Panc1 (cell line): ENCODE measurements at regions of chr13 and their contacts with region 1.

Region 1: GRCh38 chr13:114226699-114227323 is 7.9 kb upstream of the CDC16 start:
- DNase-seq: peak; percentile 62
- ATAC-seq: peak; percentile 92
- H3K4me3 ChIP-seq: no peak overlapping the region
- H3K27ac ChIP-seq: peak overlapping the region; percentile 61; the same call in 1 of the 2 replicates
- H3K4me1 ChIP-seq: peaks cover 15% of the 10 kb centered on the region
- H3K27me3 ChIP-seq: no peaks in the 10 kb centered on the region
- CTCF ChIP-seq: peak; percentile 85

Region 2: DNA sequence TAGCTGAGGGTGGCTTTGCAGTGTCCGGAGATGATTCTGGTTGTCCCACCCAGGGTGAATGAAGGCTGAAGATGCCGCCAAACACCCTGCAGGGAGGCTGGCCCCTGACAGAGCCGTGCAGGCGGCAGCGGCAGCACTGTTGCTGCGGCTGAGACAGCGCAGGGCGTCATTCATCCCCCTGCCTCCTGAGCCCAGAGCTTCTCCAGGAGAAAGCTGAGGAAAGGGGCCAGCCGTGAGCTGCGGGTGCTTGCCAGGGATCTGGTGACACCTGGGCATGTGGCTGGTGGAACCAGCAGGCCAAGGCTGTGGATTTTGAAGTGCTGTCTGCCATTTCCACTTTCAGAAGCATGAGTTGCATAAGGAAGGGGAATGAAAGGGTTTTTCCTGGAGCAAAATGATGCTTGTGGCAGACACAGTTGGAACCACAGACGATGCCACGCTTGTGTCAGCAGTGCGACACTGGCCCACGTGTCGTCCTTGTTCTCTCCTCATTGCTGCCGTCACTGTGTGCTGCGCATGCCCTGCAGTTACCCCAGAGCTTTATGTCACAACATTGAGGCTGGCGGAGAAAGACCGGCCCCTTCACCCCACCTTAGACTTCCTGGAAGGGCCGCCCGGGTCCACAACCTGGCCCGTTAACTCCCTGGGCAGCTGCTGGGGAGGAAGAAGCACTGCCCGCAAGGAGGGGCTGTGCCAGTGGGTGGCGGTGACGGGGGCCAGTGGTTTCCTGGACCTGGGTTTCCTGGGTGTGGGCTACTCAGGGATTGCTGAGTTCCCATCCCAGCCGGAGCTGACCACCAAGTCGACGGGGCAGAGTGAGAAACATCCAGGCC is 619.5 kb before region 1 on chr13:
- CTCF ChIA-PET with region 1: no interaction called
- POLR2A ChIA-PET with region 1: no interaction called
- in situ Hi-C with region 1: no loop called
- intact Hi-C with region 1: no loop called
- DNase-seq: no peak
- ATAC-seq: no peak
- H3K4me3 ChIP-seq: no peak overlapping the region
- H3K27ac ChIP-seq: no peak overlapping the region
- H3K4me1 ChIP-seq: no peaks in the 10 kb centered on the region
- H3K27me3 ChIP-seq: no peaks in the 10 kb centered on the region
- CTCF ChIP-seq: no peak

Region 3: GRCh38 chr13:113951246-113951999 is 275.4 kb before region 1 on chr13:
- CTCF ChIA-PET with region 1: no interaction called
- POLR2A ChIA-PET with region 1: no interaction called
- in situ Hi-C with region 1: no loop called
- intact Hi-C with region 1: no loop called
- DNase-seq: no peak
- ATAC-seq: peak; percentile 80
- H3K4me3 ChIP-seq: no peak overlapping the region
- H3K27ac ChIP-seq: no peak overlapping the region
- H3K4me1 ChIP-seq: no peaks in the 10 kb centered on the region
- H3K27me3 ChIP-seq: no peaks in the 10 kb centered on the region
- CTCF ChIP-seq: peak; percentile 57

Region 4: GRCh38 chr13:114128624-114129522 is 97.9 kb before region 1 on chr13:
- CTCF ChIA-PET with region 1: no interaction called
- POLR2A ChIA-PET with region 1: no interaction called
- in situ Hi-C with region 1: no loop called
- intact Hi-C with region 1: loop called (anchors 5 kb)
- DNase-seq: no peak
- ATAC-seq: peak; percentile 52
- H3K4me3 ChIP-seq: peak overlapping the region; percentile 81 to 85
- H3K27ac ChIP-seq: peak overlapping the region; percentile 95
- H3K4me1 ChIP-seq: peaks cover 47% of the 10 kb centered on the region
- H3K27me3 ChIP-seq: no peaks in the 10 kb centered on the region
- CTCF ChIP-seq: no peak

Region 5: GRCh38 chr13:114140131-114140905 is 86.5 kb before region 1 on chr13:
- CTCF ChIA-PET with region 1: interaction called, 16 read pairs
- POLR2A ChIA-PET with region 1: no interaction called
- in situ Hi-C with region 1: no loop called
- intact Hi-C with region 1: no loop called
- DNase-seq: no peak
- ATAC-seq: peak; percentile 46
- H3K4me3 ChIP-seq: peak overlapping the region; percentile 17 to 41; a peak in 3 of 4 replicates
- H3K27ac ChIP-seq: peak overlapping the region; percentile 58
- H3K4me1 ChIP-seq: peaks cover 4% of the 10 kb centered on the region
- H3K27me3 ChIP-seq: no peaks in the 10 kb centered on the region
- CTCF ChIP-seq: no peak

Region 6: DNA sequence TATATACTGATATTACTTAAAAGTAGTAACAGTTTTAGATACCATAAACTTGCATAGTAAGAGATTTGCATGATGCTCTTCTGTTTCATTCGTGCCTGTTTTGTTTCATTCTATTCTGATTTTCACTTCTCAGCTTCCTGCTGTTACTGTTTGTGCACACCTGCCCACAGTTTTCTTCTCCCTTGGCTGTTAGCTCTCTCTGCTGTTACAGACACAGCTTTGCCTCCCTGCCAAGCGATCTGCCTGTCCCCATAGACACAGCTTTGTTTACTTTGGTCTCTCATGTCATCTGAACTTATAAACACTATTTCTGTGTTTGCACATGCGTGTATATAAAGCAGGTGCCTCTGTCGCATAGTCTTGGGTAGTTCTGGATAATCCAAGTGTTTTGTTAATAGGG is 33.2 kb after region 1 on chr13:
- CTCF ChIA-PET with region 1: no interaction called
- POLR2A ChIA-PET with region 1: no interaction called
- in situ Hi-C with region 1: no loop called
- intact Hi-C with region 1: no loop called
- DNase-seq: no peak
- ATAC-seq: no peak
- H3K4me3 ChIP-seq: no peak overlapping the region
- H3K27ac ChIP-seq: no peak overlapping the region
- H3K4me1 ChIP-seq: no peaks in the 10 kb centered on the region
- H3K27me3 ChIP-seq: no peaks in the 10 kb centered on the region
- CTCF ChIP-seq: no peak